Esophagus squamous epithelium (tissue), 5 donors: ENCODE measurements at regions of chr11 and their contacts with region 1.

Region 1: DNA sequence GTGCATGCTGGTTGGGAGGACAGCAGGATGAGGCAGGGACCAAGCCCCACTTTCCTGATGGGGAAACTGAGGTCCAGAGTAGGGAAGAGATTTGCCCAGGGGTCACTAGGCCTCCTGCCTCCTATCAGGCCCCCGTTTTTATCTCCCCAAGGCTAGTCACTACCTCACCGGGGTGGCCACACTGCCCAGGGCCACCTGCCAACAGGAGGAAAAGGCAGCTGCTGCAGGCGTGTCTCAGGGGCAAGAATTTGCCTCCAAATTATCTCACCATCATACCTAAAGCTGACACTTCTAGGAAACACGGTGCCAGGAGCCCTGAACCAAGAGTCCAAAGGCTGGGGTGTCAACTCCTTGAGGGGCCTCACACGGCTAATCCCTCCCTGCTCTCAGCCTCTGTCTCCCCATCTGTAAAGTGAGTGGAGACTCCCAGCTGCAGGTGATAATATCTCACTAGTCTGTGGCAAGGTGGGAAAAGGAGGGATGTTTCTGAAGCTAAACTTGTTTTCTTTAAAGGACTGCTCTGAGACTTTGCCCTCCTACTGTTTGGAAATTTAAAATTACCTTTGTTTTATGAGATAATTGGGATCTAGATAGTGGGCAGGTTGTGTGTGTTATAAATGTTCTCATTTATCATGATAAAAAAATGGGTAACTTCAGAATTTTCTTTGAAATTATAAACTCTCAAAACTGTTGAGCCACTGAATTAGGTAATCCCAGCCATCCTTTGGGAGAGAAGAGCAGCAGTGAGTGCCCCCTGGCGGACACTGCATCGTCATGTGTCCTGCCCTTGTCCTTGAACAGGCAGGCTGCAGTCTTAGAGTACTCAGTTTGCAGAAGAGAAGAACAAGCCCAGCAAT is 60.0 kb downstream of the MYO7A start:
- DNase-seq: no peak
- H3K4me3 ChIP-seq: no peak overlapping the region
- H3K27ac ChIP-seq: no peak overlapping the region
- H3K4me1 ChIP-seq: peaks cover 0 to 9% (median 0%) of the 10 kb centered on the region in 3 donors
- H3K27me3 ChIP-seq: peaks cover 0 to 4% (median 0%) of the 10 kb centered on the region in 4 donors
- CTCF ChIP-seq: peak; percentile 58 to 92 (median 87)
- POLR2A ChIP-seq: no peak

Region 2: DNA sequence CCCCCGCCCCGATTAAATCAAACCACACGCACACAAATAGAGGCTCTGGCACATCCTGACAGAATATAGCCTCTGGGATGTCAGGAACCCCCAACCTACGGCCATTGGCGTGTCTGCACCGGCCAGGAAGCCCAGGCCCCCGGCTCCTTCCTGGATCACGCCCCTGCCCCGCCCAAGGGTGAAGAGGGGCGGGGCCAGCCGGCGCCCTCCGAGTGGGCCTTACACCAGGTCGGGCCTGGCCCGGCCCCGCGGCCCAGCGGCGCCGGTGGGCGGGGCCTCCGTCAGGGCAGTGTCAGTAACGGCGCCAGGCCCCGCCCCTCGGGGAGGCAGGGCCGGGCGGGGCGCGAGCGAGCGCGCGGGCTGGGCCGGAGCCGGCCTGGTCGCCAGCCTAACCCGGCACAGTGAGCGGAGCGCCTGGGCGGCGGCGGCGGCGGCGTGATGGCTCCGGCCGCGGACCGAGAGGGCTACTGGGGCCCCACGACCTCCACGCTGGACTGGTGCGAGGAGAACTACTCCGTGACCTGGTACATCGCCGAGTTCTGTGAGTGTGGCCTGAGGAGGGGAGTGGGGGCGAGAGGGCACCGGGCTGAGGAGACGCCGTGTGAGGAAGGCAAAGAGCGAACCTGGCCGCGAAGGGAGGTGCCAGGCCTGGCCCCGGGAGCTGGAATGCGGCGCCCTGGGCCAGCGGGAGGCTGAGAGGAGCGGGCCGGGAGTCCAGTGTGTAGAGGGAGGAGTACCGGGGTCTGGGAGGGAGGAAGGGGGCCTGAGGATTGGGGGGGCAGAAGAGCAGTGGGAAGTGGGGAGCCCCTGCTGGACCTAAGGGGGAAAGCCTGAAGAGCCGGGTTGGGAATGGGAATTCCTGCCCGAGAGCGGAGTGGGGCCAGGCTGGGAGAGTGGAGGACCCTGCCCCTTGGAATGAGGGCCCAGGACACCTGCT is 327.2 kb before region 1 on chr11 and contains the start of gene ACER3:
- intact Hi-C with region 1: no loop called
- DNase-seq: peak; percentile 47
- H3K4me3 ChIP-seq: peak within 1 kb of the TSS; percentile 75 to 87 (median 78)
- H3K27ac ChIP-seq: peak within 1 kb of the TSS; percentile 90 to 94 (median 92)
- H3K4me1 ChIP-seq: peaks cover 7 to 39% (median 20%) of the 10 kb centered on the region in 3 donors
- H3K27me3 ChIP-seq: no peaks in the 10 kb centered on the region
- CTCF ChIP-seq: peak in 2 of 6 experiments; percentile 1 to 27
- POLR2A ChIP-seq: peak in 3 of 4 donors; percentile 40 to 92 (median 91)
- total RNA-seq, gene ACER3: 9.9 to 34.2 (median 23.3) TPM

Region 3: DNA sequence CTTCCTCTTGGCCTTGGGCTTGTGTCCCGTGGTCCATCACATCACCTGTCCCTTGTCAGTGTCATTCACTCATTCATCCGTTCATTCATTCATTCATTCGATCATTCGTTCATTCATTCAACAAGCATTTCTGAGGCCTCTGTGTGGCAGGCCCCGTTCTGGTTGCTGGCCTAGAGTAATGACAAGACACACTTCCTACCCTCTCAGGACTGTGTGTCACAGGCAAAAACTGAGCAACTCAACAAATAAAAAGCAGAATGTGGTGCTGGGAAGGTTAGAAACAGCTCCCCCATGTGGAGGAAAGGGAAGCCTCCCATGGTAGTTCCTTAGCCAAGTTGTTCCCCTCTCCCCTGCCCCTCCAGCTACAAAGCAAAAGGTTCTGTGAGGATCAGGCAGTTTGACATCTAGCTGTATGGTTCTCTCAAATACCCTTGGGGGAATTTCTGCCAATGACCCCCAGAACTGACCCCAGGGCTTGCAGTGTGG is 86.9 kb before region 1 on chr11:
- intact Hi-C with region 1: no loop called
- DNase-seq: no peak
- H3K4me3 ChIP-seq: no peak overlapping the region
- H3K27ac ChIP-seq: no peak overlapping the region
- H3K4me1 ChIP-seq: no peaks in the 10 kb centered on the region
- H3K27me3 ChIP-seq: no peaks in the 10 kb centered on the region
- CTCF ChIP-seq: peak in 2 of 6 experiments; percentile 18 to 45
- POLR2A ChIP-seq: no peak

Region 4: GRCh38 chr11:77127232-77127911 is 60.6 kb before region 1 on chr11:
- intact Hi-C with region 1: loop called (anchors 5 kb)
- DNase-seq: no peak
- H3K4me3 ChIP-seq: peak overlapping the region; percentile 6 to 66 (median 39)
- H3K27ac ChIP-seq: no peak overlapping the region
- H3K4me1 ChIP-seq: peaks cover 13 to 39% (median 24%) of the 10 kb centered on the region in 3 donors
- H3K27me3 ChIP-seq: peaks cover 0 to 13% (median 0%) of the 10 kb centered on the region in 4 donors
- CTCF ChIP-seq: peak; percentile 81 to 97 (median 94)
- POLR2A ChIP-seq: no peak

Region 5: DNA sequence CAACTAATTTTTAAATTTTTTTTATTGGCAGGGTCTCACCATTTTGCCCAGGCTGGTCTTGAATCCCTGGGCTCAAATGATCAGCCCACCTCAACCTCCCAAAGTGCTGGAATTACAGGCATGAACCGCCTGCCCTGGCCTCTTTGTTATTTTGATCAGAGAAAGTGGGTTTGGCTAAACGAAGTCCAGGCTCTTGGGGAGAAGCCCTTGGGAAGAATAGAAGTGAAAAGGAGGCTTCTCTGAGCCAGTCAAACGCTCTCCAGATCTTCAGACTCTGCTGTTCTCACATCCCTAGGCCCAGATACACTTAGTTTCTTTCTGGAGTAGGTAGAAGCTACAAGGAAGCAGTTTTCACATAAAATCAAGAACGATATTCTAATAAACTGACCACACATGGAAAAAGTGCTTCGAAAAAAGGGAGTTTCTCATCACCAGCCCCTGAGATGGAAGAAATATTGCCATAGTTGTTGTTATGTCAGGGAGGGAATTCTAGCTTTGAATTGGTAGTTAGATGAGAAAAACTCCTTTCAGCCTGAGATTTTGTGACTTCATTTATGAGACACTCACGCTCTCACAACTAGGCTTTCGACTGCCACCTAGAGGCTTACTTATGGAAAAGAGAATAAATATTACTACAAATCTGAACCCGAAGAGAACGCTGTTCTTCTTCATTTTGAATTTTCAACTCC is 360.0 kb after region 1 on chr11:
- intact Hi-C with region 1: loop called (anchors 5 kb)
- DNase-seq: peak; percentile 3
- H3K4me3 ChIP-seq: no peak overlapping the region
- H3K27ac ChIP-seq: no peak overlapping the region
- H3K4me1 ChIP-seq: peaks cover 0 to 9% (median 0%) of the 10 kb centered on the region in 3 donors
- H3K27me3 ChIP-seq: no peaks in the 10 kb centered on the region
- CTCF ChIP-seq: peak; percentile 39 to 76 (median 54)
- POLR2A ChIP-seq: no peak